CD4-positive, alpha-beta memory T cell (primary cell): ENCODE measurements at regions of chr9 and their contacts with region 1.

Region 1: DNA sequence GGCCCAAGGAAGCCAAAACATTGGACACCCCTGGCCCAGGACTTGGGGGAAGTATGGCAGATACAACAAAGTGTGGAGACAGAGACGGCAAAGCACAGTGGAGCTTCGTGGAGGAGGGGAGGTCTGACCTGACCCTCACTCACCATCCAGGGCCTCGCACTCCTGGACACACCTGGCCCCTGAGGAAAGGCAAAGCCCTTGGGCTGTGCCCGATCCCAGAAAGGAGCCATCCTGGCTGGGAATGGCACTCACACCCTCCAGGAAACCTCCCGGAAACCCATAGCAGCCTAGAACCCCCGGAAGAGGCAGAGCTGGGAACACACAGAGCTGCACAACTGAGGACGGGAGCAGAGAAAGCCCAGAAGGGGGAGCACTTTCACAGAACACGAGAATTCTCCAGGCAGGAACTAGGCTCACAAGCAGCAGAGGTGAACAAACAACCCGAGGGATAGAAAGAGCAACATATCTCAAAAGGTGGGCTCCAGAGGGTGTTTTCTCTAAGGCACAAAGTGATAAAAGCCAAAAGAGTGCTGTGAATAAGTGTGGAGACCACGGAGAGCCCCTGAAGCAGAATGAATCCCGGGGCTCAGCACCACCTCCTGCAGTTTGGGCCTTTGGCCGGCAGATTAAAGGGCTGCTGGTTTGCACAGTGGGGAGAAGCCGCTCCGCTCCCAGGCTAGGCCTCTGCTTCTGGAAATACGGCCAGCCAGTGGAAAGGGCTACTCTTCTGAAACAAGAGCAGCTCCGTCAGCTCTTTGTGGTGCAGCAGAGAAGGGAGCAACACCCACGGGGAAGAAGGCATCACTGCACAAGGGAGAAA is 108.2 kb downstream of the UBE2R2 start:
- DNase-seq: peak in 4 of 5 donors; percentile 11 to 23 (median 18)
- H3K4me3 ChIP-seq: no peak overlapping the region
- H3K4me3 Mint-ChIP-seq: no peak overlapping the region
- H3K27ac ChIP-seq: no peak overlapping the region
- H3K27ac Mint-ChIP-seq: peak overlapping the region in 4 of 7 donors; percentile 18 to 68 (median 50)
- H3K4me1 ChIP-seq: no peaks in the 10 kb centered on the region
- H3K4me1 Mint-ChIP-seq: peaks cover 0 to 5% (median 0%) of the 10 kb centered on the region in 4 donors
- H3K27me3 ChIP-seq: no peaks in the 10 kb centered on the region
- H3K27me3 Mint-ChIP-seq: no peaks in the 10 kb centered on the region

Region 2: GRCh38 chr9:33913541-33913940 is 11.6 kb before region 1 on chr9:
- CTCF ChIA-PET with region 1: interaction called, 17 read pairs
- POLR2A ChIA-PET with region 1: no interaction called
- intact Hi-C with region 1: no loop called
- DNase-seq: no peak
- H3K4me3 ChIP-seq: no peak overlapping the region
- H3K4me3 Mint-ChIP-seq: no peak overlapping the region
- H3K27ac ChIP-seq: no peak overlapping the region
- H3K27ac Mint-ChIP-seq: peak overlapping the region in 2 of 7 donors; percentile 48 to 57
- H3K4me1 ChIP-seq: no peaks in the 10 kb centered on the region
- H3K4me1 Mint-ChIP-seq: peaks cover 0 to 3% (median under 1%) of the 10 kb centered on the region in 4 donors
- H3K27me3 ChIP-seq: no peaks in the 10 kb centered on the region
- H3K27me3 Mint-ChIP-seq: no peaks in the 10 kb centered on the region